HepG2 (cell line): ENCODE measurements at regions of chr11 and their contacts with region 1.

Region 1: DNA sequence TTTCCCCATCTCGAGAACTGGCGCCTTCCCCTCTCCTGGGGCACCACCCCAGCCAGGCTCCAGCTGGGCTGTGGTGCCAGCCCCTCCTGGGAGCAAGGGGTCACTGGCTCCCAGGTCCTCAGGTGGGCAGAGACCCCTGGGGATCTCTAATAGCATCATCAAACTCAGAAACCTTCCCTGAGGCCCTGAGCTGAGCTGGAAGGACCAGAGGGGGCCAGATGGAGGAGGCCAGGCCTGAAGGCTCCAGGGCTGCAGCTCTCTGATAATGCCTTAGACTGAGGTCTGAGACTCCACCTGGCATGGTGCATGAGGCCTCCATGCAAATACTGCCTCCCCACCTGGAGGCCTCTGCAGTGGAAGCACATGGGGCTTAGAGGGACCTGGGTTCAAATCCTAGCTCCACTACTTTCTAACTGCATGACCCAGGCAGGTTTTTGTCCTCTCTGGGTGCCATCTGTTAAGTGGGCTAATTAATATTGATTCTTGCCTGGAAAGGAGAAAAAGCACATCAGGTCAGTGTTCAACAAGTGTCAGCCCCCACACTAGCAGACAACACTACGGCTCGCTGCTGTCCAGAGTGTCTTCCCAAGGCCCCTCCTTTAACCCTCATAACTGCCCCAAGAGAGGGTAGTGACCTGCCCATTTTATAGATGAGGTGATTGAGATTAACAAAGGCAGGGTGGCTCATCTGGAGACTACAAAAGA is 1.5 kb downstream of the MAPK8IP1 start:
- DNase-seq: no peak
- ATAC-seq: no peak
- H3K4me3 ChIP-seq: no peak overlapping the region
- H3K27ac ChIP-seq: no peak overlapping the region
- H3K4me1 ChIP-seq: no peaks in the 10 kb centered on the region
- H3K27me3 ChIP-seq: no peaks in the 10 kb centered on the region; a peak in 2 of 5 replicates
- CTCF ChIP-seq: no peak
- EP300 ChIP-seq: no peak
- POLR2A ChIP-seq: no peak
- RAD21 ChIP-seq: no peak

Region 2: GRCh38 chr11:45724145-45724544 is 162.8 kb before region 1 on chr11:
- CTCF ChIA-PET with region 1: no interaction called
- POLR2A ChIA-PET with region 1: no interaction called
- in situ Hi-C with region 1: no loop called
- intact Hi-C with region 1: no loop called
- DNase-seq: no peak
- ATAC-seq: no peak
- H3K4me3 ChIP-seq: no peak overlapping the region
- H3K27ac ChIP-seq: no peak overlapping the region
- H3K4me1 ChIP-seq: no peaks in the 10 kb centered on the region
- H3K27me3 ChIP-seq: peaks cover 0 to 13% of the 10 kb centered on the region in 2 experiments; a peak in 2 of 5 replicates
- CTCF ChIP-seq: no peak
- EP300 ChIP-seq: no peak
- POLR2A ChIP-seq: no peak
- RAD21 ChIP-seq: no peak

Region 3: DNA sequence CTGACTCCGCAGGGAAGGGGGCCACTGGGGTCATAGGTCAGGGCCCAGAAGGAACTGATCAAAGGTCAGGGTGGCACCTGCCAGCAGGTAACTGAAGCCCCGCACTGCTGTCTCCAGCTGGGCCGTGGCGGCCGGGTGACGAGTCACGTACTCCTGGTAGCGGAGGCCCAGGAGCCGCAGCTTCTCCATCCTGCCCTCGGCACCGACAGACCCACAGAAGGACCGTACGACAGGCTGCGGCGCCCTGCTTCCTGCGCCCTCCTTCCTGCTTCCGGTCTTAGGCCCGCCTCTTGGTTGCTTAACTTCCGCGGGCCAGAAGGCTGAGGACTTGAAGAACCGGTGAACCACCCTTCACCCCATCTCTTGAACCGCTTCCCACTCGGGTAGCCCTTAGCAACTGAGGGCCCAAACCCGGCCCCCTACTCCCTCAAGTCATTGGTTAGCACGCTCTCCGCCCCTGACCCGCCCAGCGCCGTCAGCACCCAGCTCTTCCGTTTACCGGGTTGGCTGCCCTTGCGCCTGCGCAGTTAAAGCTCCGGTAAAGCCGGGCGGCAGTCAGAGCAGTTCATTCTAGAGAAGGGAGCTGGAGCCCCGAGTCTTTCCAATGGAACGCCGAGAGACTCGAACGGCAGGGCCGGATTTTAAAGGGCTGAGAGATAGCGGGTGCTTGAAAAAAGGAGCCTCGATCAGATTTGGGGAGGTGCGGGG is 30.8 kb after region 1 on chr11 and contains the start of gene PEX16:
- CTCF ChIA-PET with region 1: no interaction called
- POLR2A ChIA-PET with region 1: no interaction called
- in situ Hi-C with region 1: no loop called
- intact Hi-C with region 1: loop called (anchors 1 kb)
- DNase-seq: peak; percentile 95
- ATAC-seq: peak; percentile 75
- H3K4me3 ChIP-seq: peak within 1 kb of the TSS; percentile 82 to 94 (median 90)
- H3K27ac ChIP-seq: peak within 1 kb of the TSS; percentile 88
- H3K4me1 ChIP-seq: peaks cover 41% of the 10 kb centered on the region
- H3K27me3 ChIP-seq: peaks cover 0 to 1% of the 10 kb centered on the region in 2 experiments; a peak in 1 of 5 replicates
- CTCF ChIP-seq: no peak
- EP300 ChIP-seq: peak in 1 of 2 experiments; percentile 20; a peak in 2 of 4 replicates
- POLR2A ChIP-seq: peak; percentile 77 to 81
- RAD21 ChIP-seq: peak; percentile 44
- total RNA-seq, gene PEX16: 18.6 and 21.8 TPM in 2 replicates

Region 4: DNA sequence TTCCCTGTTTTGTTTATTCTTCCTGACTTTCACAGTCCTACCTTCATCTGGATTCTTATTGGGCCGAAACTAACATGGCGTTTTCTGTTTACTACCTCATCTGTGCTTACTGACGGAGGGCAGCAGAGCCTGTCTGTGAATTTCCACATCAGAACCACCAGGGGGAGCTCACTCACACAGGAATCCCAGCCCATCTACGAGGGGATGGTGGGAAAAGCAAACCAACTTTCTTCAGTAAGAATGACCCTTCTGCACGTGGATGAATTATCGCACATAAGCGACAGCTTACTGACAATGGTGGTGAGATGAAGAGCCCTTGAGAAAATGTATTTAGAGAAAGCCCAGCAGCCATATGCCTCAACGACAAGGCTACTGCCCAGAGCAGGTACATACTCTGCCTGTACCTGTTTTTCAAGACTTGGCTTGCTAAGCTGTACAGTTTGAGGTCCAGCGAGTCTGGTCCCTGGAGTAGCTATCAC is 78.0 kb after region 1 on chr11:
- CTCF ChIA-PET with region 1: no interaction called
- POLR2A ChIA-PET with region 1: no interaction called
- in situ Hi-C with region 1: no loop called
- intact Hi-C with region 1: no loop called
- DNase-seq: peak; percentile 54
- ATAC-seq: peak; percentile 97
- H3K4me3 ChIP-seq: no peak overlapping the region
- H3K27ac ChIP-seq: no peak overlapping the region
- H3K4me1 ChIP-seq: no peaks in the 10 kb centered on the region
- H3K27me3 ChIP-seq: no peaks in the 10 kb centered on the region
- CTCF ChIP-seq: peak; percentile 88
- EP300 ChIP-seq: no peak
- POLR2A ChIP-seq: no peak
- RAD21 ChIP-seq: 0 out of 2 replicates have a peak, but pooled peaks have one; percentile 42